K562 (cell line): ENCODE measurements at regions of chr5 and their contacts with region 1.

Region 1: DNA sequence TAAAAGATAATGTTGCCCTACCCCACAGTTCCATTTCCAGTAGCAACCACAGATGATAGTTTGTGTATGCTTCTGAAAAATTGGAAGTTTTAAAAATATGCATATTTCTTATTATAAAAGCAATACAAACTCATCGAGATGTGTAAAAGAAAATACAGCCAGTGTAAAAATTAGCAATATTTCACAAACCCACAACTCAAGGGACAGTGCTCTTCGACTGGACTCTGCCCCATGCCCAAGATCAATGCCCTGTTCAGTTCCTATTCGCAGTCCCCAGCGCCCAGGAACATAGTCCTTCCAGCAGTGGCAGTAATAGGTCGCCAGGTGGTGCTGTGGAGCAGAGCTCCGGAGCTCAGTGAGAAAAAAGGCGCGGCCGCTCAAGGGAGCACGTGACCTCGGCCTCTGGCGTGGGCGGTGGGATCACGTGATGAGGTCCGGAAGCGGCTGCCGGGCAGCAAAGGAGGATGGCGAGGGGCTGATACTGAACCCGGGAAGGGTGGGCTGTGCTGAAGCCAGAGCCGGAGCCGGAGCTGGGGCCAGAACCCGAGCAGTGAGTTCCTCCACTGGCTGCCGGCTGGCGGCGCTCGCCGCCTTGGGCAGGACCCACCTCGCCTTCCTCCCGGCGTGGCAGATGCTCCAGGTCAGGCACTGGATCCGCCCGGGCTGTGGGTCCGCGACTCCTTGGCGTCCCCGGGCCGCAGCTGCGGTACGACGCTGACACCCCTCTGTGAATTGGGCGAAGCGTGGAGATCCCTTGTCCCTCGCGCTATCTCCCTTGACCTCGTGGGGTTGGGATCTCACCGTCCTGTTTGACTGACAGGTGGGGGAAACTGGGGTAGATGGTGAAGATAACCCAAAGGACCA is at the start of gene SLC36A1:
- DNase-seq: peak; percentile 91 to 97 (median 96)
- ATAC-seq: peak; percentile 93
- H3K4me3 ChIP-seq: peak within 1 kb of the TSS; percentile 66
- H3K27ac ChIP-seq: peak within 1 kb of the TSS; percentile 65
- H3K4me1 ChIP-seq: peaks cover 10 to 18% of the 10 kb centered on the region in 2 experiments; a peak in 3 of 5 replicates
- H3K27me3 ChIP-seq: no peaks in the 10 kb centered on the region
- CTCF ChIP-seq: peak; percentile 90 to 95 (median 92)
- EP300 ChIP-seq: peak; percentile 55; the same call in 1 of the 2 replicates
- POLR2A ChIP-seq: peak; percentile 73
- RAD21 ChIP-seq: peak; percentile 93 to 95
- polyA plus RNA-seq, gene SLC36A1: 1.6 to 1.7 TPM

Region 2: DNA sequence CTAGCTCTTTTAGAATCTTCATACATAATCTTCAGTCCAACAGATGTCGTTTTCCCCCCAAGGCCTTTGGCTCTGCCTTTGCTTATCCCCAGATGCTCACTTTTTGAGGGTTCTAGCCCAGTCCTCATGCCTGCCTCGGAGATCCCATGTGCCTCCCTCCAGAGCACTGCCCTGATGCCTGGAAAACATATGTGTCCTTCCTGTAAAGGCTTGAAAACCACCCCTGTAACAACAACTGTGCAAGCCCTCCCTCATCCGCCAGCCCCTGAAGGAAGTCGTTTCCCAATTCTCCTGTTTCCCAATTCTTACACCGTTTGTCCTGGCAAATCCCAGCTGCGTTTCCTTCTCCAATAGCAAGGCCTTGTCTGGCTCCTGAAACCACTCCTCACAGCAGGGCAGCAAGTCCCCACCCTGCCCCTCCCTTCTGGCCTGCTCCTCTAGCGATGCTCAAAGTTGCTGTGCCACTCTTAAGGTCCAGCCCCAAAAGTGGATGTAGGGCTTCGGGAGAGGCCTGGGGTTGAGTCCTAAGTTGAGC is 52.2 kb after region 1 on chr5:
- CTCF ChIA-PET with region 1: interaction called, 62 read pairs
- POLR2A ChIA-PET with region 1: no interaction called
- in situ Hi-C with region 1: no loop called
- intact Hi-C with region 1: loop called (anchors 1 kb)
- DNase-seq: no peak
- ATAC-seq: no peak
- H3K4me3 ChIP-seq: no peak overlapping the region
- H3K27ac ChIP-seq: no peak overlapping the region
- H3K4me1 ChIP-seq: no peaks in the 10 kb centered on the region; a peak in 1 of 5 replicates
- H3K27me3 ChIP-seq: no peaks in the 10 kb centered on the region
- CTCF ChIP-seq: no peak
- EP300 ChIP-seq: no peak
- POLR2A ChIP-seq: no peak
- RAD21 ChIP-seq: no peak

Region 3: GRCh38 chr5:151509836-151510235 is 62.4 kb after region 1 on chr5:
- CTCF ChIA-PET with region 1: no interaction called
- POLR2A ChIA-PET with region 1: no interaction called
- in situ Hi-C with region 1: loop called (anchors 10 kb)
- intact Hi-C with region 1: no loop called
- DNase-seq: no peak
- ATAC-seq: no peak
- H3K4me3 ChIP-seq: no peak overlapping the region
- H3K27ac ChIP-seq: no peak overlapping the region
- H3K4me1 ChIP-seq: no peaks in the 10 kb centered on the region
- H3K27me3 ChIP-seq: peaks cover 0 to 23% of the 10 kb centered on the region in 2 experiments; a peak in 4 of 5 replicates
- CTCF ChIP-seq: no peak
- EP300 ChIP-seq: no peak
- POLR2A ChIP-seq: no peak
- RAD21 ChIP-seq: no peak

Region 4: DNA sequence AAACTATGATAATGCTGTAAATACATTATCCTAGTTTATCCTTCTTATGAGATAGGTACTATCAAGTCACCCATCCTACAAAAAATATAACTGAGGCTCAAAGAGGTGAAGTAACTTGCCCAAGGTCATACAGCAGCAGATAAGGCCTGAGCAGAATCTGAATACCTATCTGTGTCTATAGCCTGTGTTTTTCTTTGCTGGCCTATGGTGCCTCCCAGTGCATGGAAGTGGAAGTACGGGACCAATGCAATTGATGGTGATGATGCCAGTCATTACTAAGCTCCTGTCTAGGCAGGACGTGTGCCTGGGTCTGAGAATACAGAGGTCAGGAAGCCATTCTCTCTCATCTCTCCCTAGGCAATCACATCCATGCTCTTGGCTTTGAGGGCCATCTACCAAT is 75.9 kb after region 1 on chr5:
- CTCF ChIA-PET with region 1: interaction called, 3 read pairs
- POLR2A ChIA-PET with region 1: no interaction called
- in situ Hi-C with region 1: loop called (anchors 10 kb)
- intact Hi-C with region 1: loop called (anchors 2 kb)
- DNase-seq: peak; percentile 55 to 66 (median 58)
- ATAC-seq: peak; percentile 91
- H3K4me3 ChIP-seq: no peak overlapping the region
- H3K27ac ChIP-seq: no peak overlapping the region
- H3K4me1 ChIP-seq: no peaks in the 10 kb centered on the region
- H3K27me3 ChIP-seq: peaks cover 17 to 27% of the 10 kb centered on the region in 2 experiments
- CTCF ChIP-seq: peak; percentile 71 to 83 (median 79)
- EP300 ChIP-seq: no peak
- POLR2A ChIP-seq: no peak
- RAD21 ChIP-seq: peak; percentile 66 to 85

Region 5: DNA sequence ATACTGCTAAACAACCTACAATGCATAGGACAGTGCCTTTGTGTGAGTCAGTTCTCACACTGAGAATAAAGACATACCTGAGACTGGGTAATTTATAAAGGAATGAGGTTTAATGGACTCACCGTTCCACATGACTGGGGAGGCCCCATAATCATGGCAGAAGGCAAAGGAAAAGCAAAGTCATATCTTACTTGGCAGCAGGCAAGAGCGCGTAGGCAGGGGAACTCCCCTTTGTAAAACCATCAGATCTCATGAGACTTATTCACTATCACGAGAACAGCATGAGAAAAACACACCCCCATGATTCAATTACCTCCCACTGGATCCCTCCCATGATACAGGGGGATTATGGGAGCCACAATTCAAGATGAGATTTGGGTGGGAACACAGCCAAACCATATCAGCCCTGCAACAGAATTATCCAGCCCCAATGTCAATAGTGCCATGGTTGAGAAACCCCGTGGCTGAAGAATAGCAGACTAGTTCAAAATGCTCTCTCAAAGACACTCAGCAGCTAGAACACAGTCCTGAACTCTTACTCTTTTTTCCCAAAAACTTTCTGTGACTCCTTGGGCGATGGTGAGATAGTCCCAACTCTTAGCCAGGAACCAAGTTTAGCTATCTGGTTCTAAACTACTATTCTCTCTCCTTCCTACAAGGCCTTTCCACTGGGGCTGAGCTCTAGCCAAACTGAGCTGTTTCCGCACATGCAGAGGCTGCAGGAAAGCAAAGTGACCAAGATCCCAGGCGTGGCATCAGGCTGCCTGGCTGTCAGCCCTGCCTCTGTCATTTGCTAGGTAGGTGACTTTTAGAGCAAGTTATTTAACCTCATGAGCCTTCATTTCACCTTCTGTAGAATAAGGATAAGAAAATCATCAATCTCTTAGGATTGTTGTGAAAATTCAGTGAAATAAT is 122.0 kb after region 1 on chr5:
- CTCF ChIA-PET with region 1: no interaction called
- POLR2A ChIA-PET with region 1: no interaction called
- in situ Hi-C with region 1: no loop called
- intact Hi-C with region 1: no loop called
- DNase-seq: peak in 1 of 4 experiments; percentile 15
- ATAC-seq: peak; percentile 54
- H3K4me3 ChIP-seq: no peak overlapping the region
- H3K27ac ChIP-seq: no peak overlapping the region
- H3K4me1 ChIP-seq: no peaks in the 10 kb centered on the region
- H3K27me3 ChIP-seq: peaks cover 22 to 64% of the 10 kb centered on the region in 2 experiments; a peak in 4 of 5 replicates
- CTCF ChIP-seq: no peak
- EP300 ChIP-seq: no peak
- POLR2A ChIP-seq: no peak
- RAD21 ChIP-seq: no peak

Region 6: DNA sequence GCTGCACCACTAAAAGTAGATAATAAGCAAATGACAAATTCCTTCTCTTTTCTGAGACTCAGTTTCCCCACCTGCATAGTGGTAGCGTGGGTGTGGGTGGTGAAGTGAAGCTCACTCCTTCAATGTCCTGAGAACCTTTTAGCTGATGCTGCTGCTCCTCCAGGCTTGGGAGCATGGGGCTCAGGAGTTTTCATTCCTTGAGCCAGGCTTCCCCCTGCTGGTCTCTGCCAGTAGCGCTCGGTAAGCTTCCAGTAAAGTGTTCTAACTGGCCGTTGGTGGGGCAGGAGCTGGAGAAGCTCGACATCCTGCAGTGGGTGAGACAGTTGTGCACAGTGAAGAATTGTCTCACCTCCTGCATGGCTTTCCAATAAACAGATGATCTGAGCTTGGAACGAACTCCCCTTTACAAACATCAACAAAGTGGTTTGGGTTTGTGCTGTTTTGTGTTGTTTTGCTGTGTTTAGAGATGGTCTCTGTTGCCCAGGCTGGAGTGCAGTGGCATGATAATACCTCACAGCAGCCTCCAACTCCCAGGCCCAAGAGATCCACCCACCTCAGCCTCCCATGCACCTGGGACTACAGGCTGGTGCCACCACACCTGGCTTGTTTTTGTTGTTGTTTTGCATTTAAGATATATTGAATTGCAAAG is 204.7 kb after region 1 on chr5:
- CTCF ChIA-PET with region 1: interaction called, 3 read pairs
- POLR2A ChIA-PET with region 1: no interaction called
- in situ Hi-C with region 1: no loop called
- intact Hi-C with region 1: loop called (anchors 2 kb)
- DNase-seq: peak; percentile 61 to 82 (median 75)
- ATAC-seq: peak; percentile 100
- H3K4me3 ChIP-seq: no peak overlapping the region
- H3K27ac ChIP-seq: no peak overlapping the region
- H3K4me1 ChIP-seq: no peaks in the 10 kb centered on the region
- H3K27me3 ChIP-seq: peaks cover 3 to 15% of the 10 kb centered on the region in 2 experiments; a peak in 4 of 5 replicates
- CTCF ChIP-seq: peak; percentile 83 to 93 (median 93)
- EP300 ChIP-seq: no peak
- POLR2A ChIP-seq: no peak
- RAD21 ChIP-seq: peak; percentile 80 to 90

Region 7: DNA sequence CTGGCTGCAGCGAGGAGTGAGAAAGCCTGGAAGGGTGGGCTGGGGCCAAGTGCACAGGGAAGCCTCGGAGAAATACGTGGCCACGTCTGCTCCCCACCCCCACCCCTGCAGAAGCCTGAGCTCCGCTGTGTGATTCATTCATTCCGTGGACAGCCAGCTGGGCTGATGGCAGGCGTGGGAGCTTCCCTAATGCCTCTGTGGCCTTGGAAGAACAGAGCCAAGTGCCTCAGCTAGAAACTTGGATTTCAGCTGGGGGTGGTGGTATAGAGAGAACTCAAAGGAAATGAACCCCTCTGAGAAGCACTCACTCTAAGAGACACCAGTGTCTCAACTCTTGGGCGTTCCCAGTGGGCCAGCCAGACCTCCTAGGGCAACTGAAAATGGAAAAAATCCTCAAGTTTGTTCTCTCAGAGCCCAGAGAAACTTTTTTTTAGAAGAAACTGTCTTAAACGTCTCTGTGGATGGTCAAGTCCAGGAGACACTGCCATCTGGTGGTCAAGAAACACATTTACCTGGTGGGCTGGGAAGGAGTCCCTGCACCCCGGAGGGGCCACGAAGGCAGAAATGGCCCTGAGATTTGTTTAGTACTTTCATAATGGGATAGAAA is 293.0 kb after region 1 on chr5:
- CTCF ChIA-PET with region 1: interaction called, 6 read pairs
- POLR2A ChIA-PET with region 1: no interaction called
- in situ Hi-C with region 1: loop called (anchors 5 kb)
- intact Hi-C with region 1: loop called (anchors 5 kb)
- DNase-seq: peak; percentile 77 to 79 (median 78)
- ATAC-seq: peak; percentile 92
- H3K4me3 ChIP-seq: no peak overlapping the region
- H3K27ac ChIP-seq: no peak overlapping the region
- H3K4me1 ChIP-seq: peaks cover 0 to 6% of the 10 kb centered on the region in 2 experiments; a peak in 3 of 5 replicates
- H3K27me3 ChIP-seq: no peaks in the 10 kb centered on the region
- CTCF ChIP-seq: peak; percentile 73 to 90 (median 81)
- EP300 ChIP-seq: no peak
- POLR2A ChIP-seq: no peak
- RAD21 ChIP-seq: peak; percentile 55 to 76

Region 8: DNA sequence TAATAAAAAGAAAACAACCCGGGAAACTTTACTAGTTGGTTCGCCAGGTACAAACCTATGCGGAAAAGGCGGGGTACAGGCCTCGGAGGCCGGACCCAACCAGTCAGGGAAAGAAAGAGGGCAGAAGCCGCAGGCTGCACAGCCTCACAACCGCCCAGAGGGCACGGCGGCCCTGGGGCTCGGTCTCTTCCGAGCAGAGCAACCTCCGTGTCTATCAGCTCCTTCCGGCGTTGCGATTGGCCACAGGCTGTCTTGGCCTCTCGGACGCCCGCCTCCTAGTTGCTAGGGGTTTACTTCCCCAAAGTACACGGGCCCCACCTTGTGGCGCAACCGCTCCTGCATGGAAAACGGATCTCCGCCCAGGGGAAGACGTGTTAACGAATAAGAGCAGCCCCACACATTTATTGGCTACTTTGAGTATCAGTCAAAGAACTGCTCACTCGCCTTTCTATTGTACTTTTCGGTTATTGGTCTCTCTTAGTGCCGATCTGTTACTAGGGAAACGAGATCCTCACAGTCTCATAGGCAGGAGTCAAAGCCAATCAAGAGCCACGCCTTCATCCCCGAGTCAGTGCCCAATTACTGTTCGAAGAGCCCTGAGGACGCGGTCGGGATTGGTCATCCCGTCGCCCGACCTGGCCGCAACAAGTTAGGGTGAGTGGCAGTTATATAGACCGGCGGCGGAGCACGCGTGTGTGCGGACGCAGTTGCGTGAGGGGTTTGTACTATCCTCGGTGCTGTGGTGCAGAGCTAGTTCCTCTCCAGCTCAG is 324.0 kb after region 1 on chr5 and contains the start of gene G3BP1:
- CTCF ChIA-PET with region 1: interaction called, 3 read pairs
- POLR2A ChIA-PET with region 1: interaction called, 4 read pairs
- in situ Hi-C with region 1: no loop called
- intact Hi-C with region 1: loop called (anchors 5 kb)
- DNase-seq: peak; percentile 90 to 100 (median 95)
- ATAC-seq: peak; percentile 87
- H3K4me3 ChIP-seq: peak within 1 kb of the TSS; percentile 90
- H3K27ac ChIP-seq: peak within 1 kb of the TSS; percentile 91
- H3K4me1 ChIP-seq: peaks cover 12 to 19% of the 10 kb centered on the region in 2 experiments; a peak in 4 of 5 replicates
- H3K27me3 ChIP-seq: no peaks in the 10 kb centered on the region
- CTCF ChIP-seq: peak; percentile 78 to 91 (median 82)
- EP300 ChIP-seq: peak; percentile 58
- POLR2A ChIP-seq: peak; percentile 95
- RAD21 ChIP-seq: peak; percentile 64 to 78
- polyA plus RNA-seq, gene G3BP1: 54.7 to 55.5 TPM